MCF 10A (cell line): ENCODE measurements at regions of chr1 and their contacts with region 1.

Region 1: DNA sequence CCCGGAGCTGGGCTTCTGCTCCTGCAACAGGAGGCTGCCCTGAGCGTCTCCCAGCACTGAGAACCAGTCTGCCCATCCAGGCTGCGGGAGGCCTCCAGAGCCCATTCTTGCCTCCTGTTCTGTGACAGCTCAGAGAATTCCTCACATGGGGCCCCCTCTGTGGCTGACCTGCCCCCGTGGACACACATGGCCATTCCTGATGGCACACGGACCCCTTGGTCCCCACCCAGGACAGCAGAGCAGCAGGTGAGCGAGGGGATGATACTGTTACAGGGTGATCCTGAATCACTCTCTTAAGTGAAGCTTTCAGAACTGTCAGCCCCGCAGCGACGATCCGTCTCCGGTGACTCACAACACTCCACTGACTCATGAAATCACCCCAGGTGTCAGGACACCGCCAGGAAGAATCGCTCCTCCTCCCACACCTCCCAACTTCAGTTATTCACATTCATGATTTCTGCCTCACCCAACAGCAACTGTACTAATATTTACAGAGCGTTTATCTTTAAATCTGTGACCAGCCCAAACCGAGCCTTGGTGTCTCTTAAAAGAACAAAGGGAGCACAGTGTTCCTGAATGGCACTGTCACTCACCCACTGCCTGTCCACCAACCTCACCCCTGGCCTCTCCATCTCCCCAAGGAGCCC is 22.5 kb downstream of the CHD5 start:
- DNase-seq: peak; percentile 92
- H3K4me3 Mint-ChIP-seq: no peak overlapping the region
- H3K27ac Mint-ChIP-seq: peak overlapping the region; percentile 84
- H3K4me1 Mint-ChIP-seq: peaks cover 26% of the 10 kb centered on the region
- H3K27me3 Mint-ChIP-seq: peaks cover 2% of the 10 kb centered on the region
- CTCF ChIP-seq: no peak

Region 2: DNA sequence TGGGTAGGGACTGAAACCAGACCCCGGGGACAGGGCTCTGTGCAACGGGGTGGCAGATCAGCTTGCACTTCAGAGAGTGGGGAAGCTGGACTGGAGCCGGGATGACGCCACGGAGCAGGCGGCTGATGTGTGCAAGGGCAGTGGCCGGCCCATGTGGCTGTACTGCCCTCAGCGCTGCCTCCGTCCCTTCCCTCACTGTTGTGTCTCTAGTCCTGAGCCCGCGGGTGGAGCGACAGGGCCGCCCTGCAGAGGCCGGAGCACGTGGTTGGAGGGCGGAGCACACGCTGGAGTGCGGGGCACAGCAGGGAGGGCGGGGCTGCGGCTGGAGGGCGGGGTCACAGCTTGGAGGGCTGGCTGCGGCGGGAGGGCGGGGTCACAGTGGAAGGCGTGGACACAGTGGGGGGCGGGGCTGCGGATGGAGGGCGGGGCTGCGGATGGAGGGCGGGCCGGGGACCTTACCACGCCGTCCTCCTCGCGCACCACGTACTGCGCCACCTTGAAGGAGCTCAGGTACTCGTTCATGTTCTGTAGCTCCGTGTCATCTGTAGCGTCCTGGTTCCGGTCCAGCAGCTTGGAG is 30.0 kb before region 1 on chr1:
- CTCF ChIA-PET with region 1: no interaction called
- POLR2A ChIA-PET with region 1: no interaction called
- intact Hi-C with region 1: no loop called
- DNase-seq: peak; percentile 73
- H3K4me3 Mint-ChIP-seq: no peak overlapping the region
- H3K27ac Mint-ChIP-seq: no peak overlapping the region
- H3K4me1 Mint-ChIP-seq: no peaks in the 10 kb centered on the region
- H3K27me3 Mint-ChIP-seq: no peaks in the 10 kb centered on the region
- CTCF ChIP-seq: no peak

Region 3: GRCh38 chr1:6144647-6145395 is 12.8 kb before region 1 on chr1:
- CTCF ChIA-PET with region 1: interaction called, 4 read pairs
- POLR2A ChIA-PET with region 1: interaction called, 10 read pairs
- intact Hi-C with region 1: no loop called
- DNase-seq: no peak
- H3K4me3 Mint-ChIP-seq: no peak overlapping the region
- H3K27ac Mint-ChIP-seq: no peak overlapping the region
- H3K4me1 Mint-ChIP-seq: peaks cover 6% of the 10 kb centered on the region
- H3K27me3 Mint-ChIP-seq: no peaks in the 10 kb centered on the region
- CTCF ChIP-seq: no peak